ENCODE measurements at regions of chr22 and their contacts with region 1.

Region 1: DNA sequence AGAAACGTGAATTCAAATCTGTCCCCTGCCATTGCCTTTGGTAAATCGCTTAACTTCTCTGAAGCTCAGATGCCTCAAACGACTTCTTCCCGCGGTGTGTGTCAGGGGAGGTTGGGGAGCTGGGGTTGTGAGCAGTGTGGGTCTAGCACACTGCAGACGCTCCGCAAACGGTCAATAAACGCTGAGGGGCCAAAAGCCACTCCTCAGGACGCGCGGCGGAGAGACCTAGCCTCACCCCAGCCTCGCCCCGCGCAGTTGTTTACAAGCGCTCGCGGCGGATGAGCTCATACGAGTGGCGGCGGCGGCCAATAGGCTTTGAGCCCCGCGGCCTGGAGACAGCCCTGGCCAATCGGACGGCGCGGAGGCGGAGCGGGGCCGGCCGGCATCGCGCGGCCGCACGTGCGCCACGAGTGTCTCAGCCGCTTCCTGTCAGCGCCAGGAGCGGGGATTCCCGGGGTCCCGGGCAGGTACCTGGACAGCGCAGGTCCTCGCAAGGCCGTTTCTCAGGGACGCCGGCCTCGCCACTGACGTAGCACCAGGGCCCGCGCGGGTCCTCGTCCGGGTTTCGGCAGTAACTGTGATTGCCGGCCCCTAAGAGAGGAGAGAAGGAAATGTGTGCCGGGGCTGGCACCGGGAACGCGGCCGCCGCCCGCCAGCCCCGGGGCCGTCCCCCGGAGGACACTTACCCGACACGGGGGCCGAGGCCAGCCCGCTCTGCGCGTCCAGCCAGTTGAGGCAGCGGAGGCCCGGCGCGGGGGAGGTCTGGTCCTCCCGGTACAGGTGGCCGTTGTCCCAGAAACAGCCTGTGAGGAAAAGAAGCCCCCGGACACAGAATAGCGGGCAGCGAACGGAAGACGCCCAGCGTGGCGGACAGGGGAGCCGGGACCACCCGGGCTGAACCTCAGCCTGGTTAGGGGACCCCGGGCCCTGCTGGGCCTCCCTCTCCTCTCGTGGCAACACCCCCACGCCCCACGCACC is 1.5 kb downstream of the PIK3IP1 start:
- DNase-seq: peak; percentile 89 to 98
- H3K4me3 ChIP-seq: peak overlapping the region; percentile 84 to 86
- H3K27ac ChIP-seq: peak overlapping the region; percentile 98 to 99
- H3K4me1 ChIP-seq: peaks cover 12 to 34% of the 10 kb centered on the region in 2 donors
- H3K27me3 ChIP-seq: no peaks in the 10 kb centered on the region
- CTCF ChIP-seq: no peak

Region 2: GRCh38 chr22:30947816-30948454 is 342.8 kb before region 1 on chr22:
- intact Hi-C with region 1: loop called (anchors 10 kb)
- DNase-seq: no peak
- H3K4me3 ChIP-seq: peak overlapping the region in 1 of 2 donors; percentile 10
- H3K27ac ChIP-seq: peak overlapping the region; percentile 88 to 96
- H3K4me1 ChIP-seq: peaks cover 21 to 85% of the 10 kb centered on the region in 2 donors
- H3K27me3 ChIP-seq: no peaks in the 10 kb centered on the region
- CTCF ChIP-seq: peak; percentile 49 to 64 (median 59)

Region 3: GRCh38 chr22:31155422-31155821 is 135.4 kb before region 1 on chr22:
- intact Hi-C with region 1: loop called (anchors 5 kb)
- DNase-seq: no peak
- H3K4me3 ChIP-seq: no peak overlapping the region
- H3K27ac ChIP-seq: peak overlapping the region; percentile 80 to 83
- H3K4me1 ChIP-seq: peaks cover 9 to 27% of the 10 kb centered on the region in 2 donors
- H3K27me3 ChIP-seq: no peaks in the 10 kb centered on the region
- CTCF ChIP-seq: no peak

Region 4: GRCh38 chr22:31345331-31346254 is 54.8 kb after region 1 on chr22:
- intact Hi-C with region 1: loop called (anchors 2 kb)
- DNase-seq: peak in 1 of 2 donors; percentile 88
- H3K4me3 ChIP-seq: peak overlapping the region; percentile 56 to 93
- H3K27ac ChIP-seq: peak overlapping the region; percentile 71 to 74
- H3K4me1 ChIP-seq: peaks cover 0 to 27% of the 10 kb centered on the region in 2 donors
- H3K27me3 ChIP-seq: no peaks in the 10 kb centered on the region
- CTCF ChIP-seq: peak; percentile 77 to 97 (median 86)

Region 5: GRCh38 chr22:31504282-31504681 is 213.5 kb after region 1 on chr22:
- intact Hi-C with region 1: no loop called
- DNase-seq: no peak
- H3K4me3 ChIP-seq: no peak overlapping the region
- H3K27ac ChIP-seq: no peak overlapping the region
- H3K4me1 ChIP-seq: no peaks in the 10 kb centered on the region
- H3K27me3 ChIP-seq: no peaks in the 10 kb centered on the region
- CTCF ChIP-seq: no peak

Measured in ascending aorta (tissue), 2 donors.